Activated CD4-positive, alpha-beta T cell treated with anti-CD3 and anti-CD28 coated beads for 36 hours (primary cell): ENCODE measurements at regions of chr3 and their contacts with region 1.

Region 1: DNA sequence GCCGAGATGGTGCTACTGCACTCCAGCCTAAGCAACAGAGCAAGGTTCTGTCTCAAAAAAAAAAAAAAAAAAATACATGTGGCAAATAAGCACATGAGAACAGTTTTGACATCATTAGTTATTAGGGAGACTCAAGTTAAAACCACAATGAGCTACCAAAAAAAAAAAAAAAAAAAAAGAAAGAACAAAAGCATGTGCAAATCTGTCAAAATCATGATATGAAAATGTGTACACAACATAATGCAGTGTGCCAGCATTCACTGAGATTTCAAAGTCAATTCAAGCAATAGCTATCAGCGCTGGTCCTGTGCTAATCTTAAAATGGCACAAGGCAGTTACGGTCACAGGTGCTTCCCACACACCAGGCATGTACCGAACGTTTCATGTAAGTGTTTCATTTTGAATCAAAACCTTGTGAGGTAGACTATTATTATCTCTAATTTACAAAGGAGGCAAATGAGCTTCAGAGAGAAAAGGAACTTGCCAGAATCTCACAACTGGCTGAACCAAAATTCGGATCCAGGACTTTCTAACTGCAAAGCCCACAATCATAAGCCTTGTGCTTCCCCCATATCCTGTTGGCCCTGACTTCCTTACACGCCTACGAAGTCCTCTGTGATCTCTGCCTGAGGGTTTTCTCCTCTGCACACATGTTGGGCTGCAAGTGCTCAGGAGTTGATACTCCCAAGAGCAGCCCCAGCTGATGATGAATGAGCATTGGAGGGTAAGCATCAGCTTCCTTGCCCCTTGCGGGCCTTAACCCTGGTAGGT is 200.1 kb upstream of the PROK2 start:
- DNase-seq: peak; percentile 69
- ATAC-seq: peak; percentile 84
- H3K4me3 Mint-ChIP-seq: peak overlapping the region; percentile 1
- H3K27ac Mint-ChIP-seq: peak overlapping the region; percentile 64
- H3K4me1 Mint-ChIP-seq: peaks cover 47% of the 10 kb centered on the region
- H3K27me3 Mint-ChIP-seq: peaks cover 4% of the 10 kb centered on the region

Region 2: DNA sequence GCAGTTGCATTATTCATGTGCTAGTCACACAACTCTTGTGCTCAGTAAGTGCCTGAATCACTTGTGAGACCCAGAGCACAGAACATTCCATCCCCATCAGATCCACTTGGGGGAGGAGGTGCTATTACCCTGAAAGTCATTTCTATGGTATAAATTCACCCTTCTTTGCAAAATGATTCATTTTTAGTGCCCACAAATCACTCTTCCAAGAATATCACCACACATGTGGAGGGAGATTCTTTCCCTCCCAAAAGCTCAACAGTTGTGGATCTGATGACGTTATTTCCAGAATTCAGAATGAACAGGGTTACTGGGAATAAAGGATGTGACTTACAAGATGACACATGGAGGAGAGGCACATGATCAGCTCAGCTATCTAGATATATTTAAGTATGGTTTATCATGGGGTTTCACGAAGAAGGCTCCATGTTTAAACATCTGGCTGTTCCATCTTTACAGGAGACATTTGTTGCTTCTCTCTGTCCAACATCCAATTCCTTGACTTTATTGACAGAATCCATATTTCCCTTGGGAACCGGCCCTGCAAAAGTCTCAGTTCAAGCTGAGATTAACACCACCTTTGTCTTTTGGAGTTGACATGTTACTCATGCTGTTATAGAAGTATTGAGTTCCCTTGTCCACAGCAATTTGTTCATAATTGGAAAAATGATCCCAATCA is 14.1 kb after region 1 on chr3:
- CTCF ChIA-PET with region 1: interaction called, 4 read pairs
- POLR2A ChIA-PET with region 1: interaction called, 8 read pairs
- intact Hi-C with region 1: loop called in 1 of 2 experiments (anchors 2 kb)
- DNase-seq: peak; percentile 47
- ATAC-seq: peak; percentile 90
- H3K4me3 Mint-ChIP-seq: no peak overlapping the region
- H3K27ac Mint-ChIP-seq: peak overlapping the region; percentile 77
- H3K4me1 Mint-ChIP-seq: peaks cover 34% of the 10 kb centered on the region
- H3K27me3 Mint-ChIP-seq: peaks cover 5% of the 10 kb centered on the region

Region 3: GRCh38 chr3:72100601-72101187 is 115.7 kb after region 1 on chr3:
- CTCF ChIA-PET with region 1: interaction called, 3 read pairs
- POLR2A ChIA-PET with region 1: no interaction called
- intact Hi-C with region 1: loop called in 1 of 2 experiments (anchors 5 kb)
- DNase-seq: peak; percentile 96
- ATAC-seq: peak; percentile 93
- H3K4me3 Mint-ChIP-seq: peak overlapping the region; percentile 70
- H3K27ac Mint-ChIP-seq: peak overlapping the region; percentile 90
- H3K4me1 Mint-ChIP-seq: peaks cover 28% of the 10 kb centered on the region
- H3K27me3 Mint-ChIP-seq: peaks cover 15% of the 10 kb centered on the region

Region 4: DNA sequence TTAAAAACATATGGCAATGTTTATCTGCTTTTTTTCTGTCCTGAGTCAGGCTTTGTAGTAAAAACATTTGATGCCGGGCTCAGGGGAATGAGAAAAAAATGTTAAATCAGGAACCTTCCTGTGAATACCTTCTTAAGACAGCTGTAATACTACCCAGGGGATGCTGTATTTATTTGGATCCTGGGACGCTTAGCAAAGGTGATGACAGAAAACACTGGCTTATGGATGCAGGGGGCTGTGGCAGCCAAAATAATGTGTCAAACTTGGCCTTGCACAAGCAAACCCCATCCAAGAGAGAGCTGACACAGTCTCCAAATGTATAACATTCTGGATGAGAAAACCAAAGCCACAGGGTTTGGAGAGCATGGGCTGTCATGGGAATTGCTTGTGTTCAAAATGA is 238.1 kb after region 1 on chr3:
- CTCF ChIA-PET with region 1: no interaction called
- POLR2A ChIA-PET with region 1: no interaction called
- intact Hi-C with region 1: no loop called
- DNase-seq: no peak
- ATAC-seq: no peak
- H3K4me3 Mint-ChIP-seq: no peak overlapping the region
- H3K27ac Mint-ChIP-seq: no peak overlapping the region
- H3K4me1 Mint-ChIP-seq: peaks cover 7% of the 10 kb centered on the region
- H3K27me3 Mint-ChIP-seq: no peaks in the 10 kb centered on the region

Region 5: GRCh38 chr3:72418244-72418643 is 433.2 kb after region 1 on chr3:
- CTCF ChIA-PET with region 1: no interaction called
- POLR2A ChIA-PET with region 1: no interaction called
- intact Hi-C with region 1: loop called in 1 of 2 experiments (anchors 1 kb)
- DNase-seq: no peak
- ATAC-seq: peak; percentile 73
- H3K4me3 Mint-ChIP-seq: no peak overlapping the region
- H3K27ac Mint-ChIP-seq: no peak overlapping the region
- H3K4me1 Mint-ChIP-seq: peaks cover 72% of the 10 kb centered on the region
- H3K27me3 Mint-ChIP-seq: no peaks in the 10 kb centered on the region

Region 6: GRCh38 chr3:72523429-72524151 is 538.6 kb after region 1 on chr3:
- CTCF ChIA-PET with region 1: no interaction called
- POLR2A ChIA-PET with region 1: no interaction called
- intact Hi-C with region 1: loop called in 1 of 2 experiments (anchors 2 kb)
- DNase-seq: no peak
- ATAC-seq: no peak
- H3K4me3 Mint-ChIP-seq: no peak overlapping the region
- H3K27ac Mint-ChIP-seq: peak overlapping the region; percentile 55
- H3K4me1 Mint-ChIP-seq: peaks cover 45% of the 10 kb centered on the region
- H3K27me3 Mint-ChIP-seq: no peaks in the 10 kb centered on the region